SK-N-SH (cell line): ENCODE measurements at regions of chr2 and their contacts with region 1.

Region 1: DNA sequence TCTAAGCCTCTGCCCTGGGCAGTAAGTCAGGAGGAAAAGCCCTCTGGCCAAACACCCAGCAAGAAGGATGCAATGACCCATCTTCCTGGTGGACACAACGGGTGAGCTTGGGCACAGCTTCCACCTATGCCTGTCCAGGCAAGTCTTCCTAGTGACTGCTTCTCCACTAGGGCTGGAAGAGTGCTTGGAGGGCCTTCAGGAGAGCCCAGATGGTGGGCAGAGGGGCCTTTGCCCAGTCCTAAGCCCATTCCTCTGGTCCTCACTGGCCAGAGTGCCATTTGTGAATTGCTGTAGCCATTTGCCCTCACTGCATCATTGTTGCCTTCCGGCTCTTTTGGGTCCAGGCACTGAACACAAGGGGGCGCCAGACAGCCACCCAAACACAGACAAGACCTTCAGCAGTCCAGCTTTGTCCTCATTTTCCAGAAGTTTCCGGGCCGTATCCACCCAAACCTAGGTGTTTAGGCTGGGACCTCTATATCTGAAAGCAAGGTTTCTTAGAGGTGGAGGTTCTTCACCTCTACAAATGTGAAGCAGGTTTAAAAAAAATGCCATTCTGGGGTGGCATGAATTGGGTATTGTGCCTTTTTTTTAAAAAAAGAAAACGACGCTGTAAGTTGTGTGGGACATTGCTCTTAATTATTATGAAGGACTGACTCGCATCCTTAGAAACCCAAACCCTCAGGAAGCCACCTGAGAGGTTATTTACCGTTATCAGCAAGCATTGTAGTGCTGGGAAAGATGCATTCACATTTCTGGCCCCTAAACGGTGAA is 29.5 kb downstream of the PAX8 start:
- DNase-seq: peak; percentile 77
- H3K4me3 ChIP-seq: no peak overlapping the region; a peak in 1 of 4 replicates
- H3K27ac ChIP-seq: no peak overlapping the region
- H3K4me1 ChIP-seq: no peaks in the 10 kb centered on the region
- H3K27me3 ChIP-seq: no peaks in the 10 kb centered on the region; the same call in 1 of the 2 replicates
- CTCF ChIP-seq: peak; percentile 95
- EP300 ChIP-seq: no peak
- RAD21 ChIP-seq: peak; percentile 83

Region 2: GRCh38 chr2:113025737-113026136 is 223.4 kb before region 1 on chr2:
- CTCF ChIA-PET with region 1: no interaction called
- POLR2A ChIA-PET with region 1: no interaction called
- DNase-seq: no peak
- H3K4me3 ChIP-seq: no peak overlapping the region
- H3K27ac ChIP-seq: no peak overlapping the region
- H3K4me1 ChIP-seq: no peaks in the 10 kb centered on the region
- H3K27me3 ChIP-seq: peaks cover 5% of the 10 kb centered on the region; the same call in 1 of the 2 replicates
- CTCF ChIP-seq: no peak
- EP300 ChIP-seq: no peak
- RAD21 ChIP-seq: no peak

Region 3: DNA sequence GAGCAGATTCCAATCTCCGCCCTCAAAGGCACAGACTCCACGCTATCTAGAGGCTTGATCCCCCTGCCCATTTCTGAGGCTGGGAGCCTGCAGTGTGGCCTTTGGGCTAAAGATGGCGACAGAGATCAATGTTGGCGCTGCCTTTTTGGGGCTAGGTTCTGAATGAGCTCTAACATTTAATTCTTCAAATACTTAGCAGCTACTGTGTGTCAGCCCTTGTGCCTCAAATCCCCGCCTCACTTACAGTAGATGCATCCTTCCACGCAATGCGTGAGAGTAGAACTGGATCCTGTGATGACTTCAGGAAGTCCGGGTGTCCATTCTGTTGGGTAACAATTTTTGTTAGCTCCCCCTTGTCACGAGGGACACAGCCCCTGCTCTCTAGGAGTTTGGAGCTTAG is 169.1 kb before region 1 on chr2:
- CTCF ChIA-PET with region 1: no interaction called
- POLR2A ChIA-PET with region 1: no interaction called
- DNase-seq: peak; percentile 40
- H3K4me3 ChIP-seq: no peak overlapping the region
- H3K27ac ChIP-seq: no peak overlapping the region
- H3K4me1 ChIP-seq: no peaks in the 10 kb centered on the region
- H3K27me3 ChIP-seq: no peaks in the 10 kb centered on the region; the same call in 1 of the 2 replicates
- CTCF ChIP-seq: peak; percentile 64
- EP300 ChIP-seq: no peak
- RAD21 ChIP-seq: peak; percentile 52

Region 4: GRCh38 chr2:113157118-113157896 is 91.9 kb before region 1 on chr2:
- CTCF ChIA-PET with region 1: no interaction called
- POLR2A ChIA-PET with region 1: no interaction called
- DNase-seq: peak; percentile 44
- H3K4me3 ChIP-seq: no peak overlapping the region
- H3K27ac ChIP-seq: no peak overlapping the region
- H3K4me1 ChIP-seq: no peaks in the 10 kb centered on the region
- H3K27me3 ChIP-seq: peaks cover 35% of the 10 kb centered on the region; the same call in 1 of the 2 replicates
- CTCF ChIP-seq: no peak
- EP300 ChIP-seq: no peak
- RAD21 ChIP-seq: no peak

Region 5: GRCh38 chr2:113203901-113204519 is 45.2 kb before region 1 on chr2:
- CTCF ChIA-PET with region 1: interaction called, 46 read pairs
- POLR2A ChIA-PET with region 1: no interaction called
- DNase-seq: peak; percentile 86
- H3K4me3 ChIP-seq: no peak overlapping the region; a peak in 1 of 4 replicates
- H3K27ac ChIP-seq: no peak overlapping the region
- H3K4me1 ChIP-seq: no peaks in the 10 kb centered on the region; a peak in 1 of 4 replicates
- H3K27me3 ChIP-seq: no peaks in the 10 kb centered on the region
- CTCF ChIP-seq: peak; percentile 88
- EP300 ChIP-seq: no peak
- RAD21 ChIP-seq: peak; percentile 96

Region 6: DNA sequence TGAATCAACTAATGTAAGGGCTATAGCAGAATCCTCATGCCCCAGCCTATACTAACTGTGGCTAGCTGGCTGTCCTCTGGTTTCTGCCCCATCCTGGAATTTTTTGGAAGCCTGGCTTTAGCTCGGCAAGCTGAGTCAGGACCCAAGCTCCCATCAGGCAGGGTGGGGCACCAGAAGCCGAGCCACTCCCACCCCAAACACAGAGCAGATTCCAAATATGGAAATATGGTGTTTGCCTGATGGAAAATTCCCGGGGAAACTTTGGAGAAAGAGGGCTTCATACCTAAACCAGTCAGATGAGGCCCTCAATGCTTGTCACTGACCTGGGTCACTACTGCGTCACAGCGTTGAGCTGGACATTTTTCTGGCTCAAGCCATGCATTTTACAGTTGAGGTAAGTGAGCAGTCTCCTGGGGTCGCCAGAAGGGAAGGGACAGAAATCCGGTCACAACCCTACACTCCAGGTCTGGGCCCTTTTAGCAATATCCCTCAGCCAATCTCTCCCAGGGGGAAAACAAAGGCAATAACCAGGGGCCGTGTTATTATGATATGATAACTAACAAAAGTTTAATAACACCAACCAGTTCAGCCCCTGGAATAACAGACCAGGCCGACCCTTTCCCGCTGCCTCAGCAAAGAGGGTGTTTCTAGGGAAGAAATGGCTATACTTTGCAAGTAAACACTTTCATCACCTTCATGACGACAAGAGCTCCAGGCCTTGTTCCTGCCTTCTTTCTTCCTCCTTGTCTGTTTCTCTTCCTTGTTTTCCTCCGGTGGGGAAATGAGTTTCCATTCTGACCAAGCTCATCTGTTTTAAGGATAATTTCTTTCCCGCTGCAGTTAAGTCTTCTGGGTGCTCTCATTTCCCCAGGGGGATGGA is 37.7 kb before region 1 on chr2:
- CTCF ChIA-PET with region 1: interaction called, 13 read pairs
- POLR2A ChIA-PET with region 1: no interaction called
- DNase-seq: no peak
- H3K4me3 ChIP-seq: no peak overlapping the region
- H3K27ac ChIP-seq: no peak overlapping the region
- H3K4me1 ChIP-seq: peaks cover 0 to 11% of the 10 kb centered on the region in 2 experiments; a peak in 1 of 4 replicates
- H3K27me3 ChIP-seq: no peaks in the 10 kb centered on the region
- CTCF ChIP-seq: no peak
- EP300 ChIP-seq: no peak
- RAD21 ChIP-seq: no peak

Region 7: GRCh38 chr2:113233593-113234550 is 15.3 kb before region 1 on chr2:
- CTCF ChIA-PET with region 1: interaction called, 21 read pairs
- POLR2A ChIA-PET with region 1: no interaction called
- DNase-seq: no peak
- H3K4me3 ChIP-seq: no peak overlapping the region
- H3K27ac ChIP-seq: no peak overlapping the region
- H3K4me1 ChIP-seq: no peaks in the 10 kb centered on the region; a peak in 1 of 4 replicates
- H3K27me3 ChIP-seq: no peaks in the 10 kb centered on the region
- CTCF ChIP-seq: 0 out of 2 replicates have a peak, but pooled peaks have one; percentile 18
- EP300 ChIP-seq: no peak
- RAD21 ChIP-seq: no peak

Region 8: GRCh38 chr2:113370478-113371091 is 121.4 kb after region 1 on chr2:
- CTCF ChIA-PET with region 1: interaction called, 14 read pairs
- POLR2A ChIA-PET with region 1: no interaction called
- DNase-seq: peak; percentile 58
- H3K4me3 ChIP-seq: no peak overlapping the region; a peak in 1 of 4 replicates
- H3K27ac ChIP-seq: no peak overlapping the region
- H3K4me1 ChIP-seq: no peaks in the 10 kb centered on the region
- H3K27me3 ChIP-seq: peaks cover 21% of the 10 kb centered on the region; the same call in 1 of the 2 replicates
- CTCF ChIP-seq: peak; percentile 69
- EP300 ChIP-seq: no peak
- RAD21 ChIP-seq: peak; percentile 85